CD8-positive, alpha-beta T cell (primary cell): ENCODE measurements at regions of chr6 and their contacts with region 1.

Region 1: GRCh38 chr6:5143634-5144311 is 58.6 kb downstream of the PPP1R3G start:
- DNase-seq: peak; percentile 72 to 90 (median 84)
- ATAC-seq: peak; percentile 73
- H3K4me3 ChIP-seq: no peak overlapping the region
- H3K4me3 Mint-ChIP-seq: no peak overlapping the region
- H3K27ac ChIP-seq: no peak overlapping the region
- H3K27ac Mint-ChIP-seq: no peak overlapping the region
- H3K4me1 ChIP-seq: no peaks in the 10 kb centered on the region
- H3K4me1 Mint-ChIP-seq: peaks cover 2% of the 10 kb centered on the region
- H3K27me3 ChIP-seq: no peaks in the 10 kb centered on the region
- H3K27me3 Mint-ChIP-seq: no peaks in the 10 kb centered on the region
- CTCF ChIP-seq: peak; percentile 98

Region 2: GRCh38 chr6:5159148-5159547 is 15.4 kb after region 1 on chr6:
- CTCF ChIA-PET with region 1: interaction called, 18 read pairs
- POLR2A ChIA-PET with region 1: interaction called, 3 read pairs
- intact Hi-C with region 1: no loop called
- DNase-seq: no peak
- ATAC-seq: no peak
- H3K4me3 ChIP-seq: no peak overlapping the region
- H3K4me3 Mint-ChIP-seq: no peak overlapping the region
- H3K27ac ChIP-seq: no peak overlapping the region
- H3K27ac Mint-ChIP-seq: no peak overlapping the region
- H3K4me1 ChIP-seq: no peaks in the 10 kb centered on the region
- H3K4me1 Mint-ChIP-seq: no peaks in the 10 kb centered on the region
- H3K27me3 ChIP-seq: no peaks in the 10 kb centered on the region
- H3K27me3 Mint-ChIP-seq: no peaks in the 10 kb centered on the region
- CTCF ChIP-seq: no peak

Region 3: DNA sequence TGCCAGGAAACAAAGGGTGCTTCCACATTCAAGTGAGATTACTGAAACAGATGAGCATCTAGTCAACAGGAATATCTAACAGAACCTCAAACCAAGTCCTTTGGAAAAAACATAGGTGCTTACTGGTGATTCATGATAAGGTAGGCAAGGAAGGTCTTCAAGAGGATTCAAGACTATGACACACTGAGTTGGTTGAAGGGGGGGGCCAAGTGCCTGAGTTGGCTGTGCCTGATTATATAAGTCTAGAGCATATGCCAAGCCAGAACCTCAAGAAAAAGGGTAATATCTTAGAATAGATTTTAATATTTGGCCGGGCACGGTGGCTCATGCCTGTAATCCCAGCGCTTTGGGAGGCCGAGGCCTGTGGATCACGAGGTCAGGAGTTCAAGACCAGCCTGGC is 53.3 kb after region 1 on chr6:
- CTCF ChIA-PET with region 1: interaction called, 11 read pairs
- POLR2A ChIA-PET with region 1: no interaction called
- intact Hi-C with region 1: no loop called
- DNase-seq: no peak
- ATAC-seq: no peak
- H3K4me3 ChIP-seq: no peak overlapping the region
- H3K4me3 Mint-ChIP-seq: no peak overlapping the region
- H3K27ac ChIP-seq: no peak overlapping the region
- H3K27ac Mint-ChIP-seq: no peak overlapping the region
- H3K4me1 ChIP-seq: no peaks in the 10 kb centered on the region
- H3K4me1 Mint-ChIP-seq: no peaks in the 10 kb centered on the region
- H3K27me3 ChIP-seq: no peaks in the 10 kb centered on the region
- H3K27me3 Mint-ChIP-seq: no peaks in the 10 kb centered on the region
- CTCF ChIP-seq: no peak

Region 4: DNA sequence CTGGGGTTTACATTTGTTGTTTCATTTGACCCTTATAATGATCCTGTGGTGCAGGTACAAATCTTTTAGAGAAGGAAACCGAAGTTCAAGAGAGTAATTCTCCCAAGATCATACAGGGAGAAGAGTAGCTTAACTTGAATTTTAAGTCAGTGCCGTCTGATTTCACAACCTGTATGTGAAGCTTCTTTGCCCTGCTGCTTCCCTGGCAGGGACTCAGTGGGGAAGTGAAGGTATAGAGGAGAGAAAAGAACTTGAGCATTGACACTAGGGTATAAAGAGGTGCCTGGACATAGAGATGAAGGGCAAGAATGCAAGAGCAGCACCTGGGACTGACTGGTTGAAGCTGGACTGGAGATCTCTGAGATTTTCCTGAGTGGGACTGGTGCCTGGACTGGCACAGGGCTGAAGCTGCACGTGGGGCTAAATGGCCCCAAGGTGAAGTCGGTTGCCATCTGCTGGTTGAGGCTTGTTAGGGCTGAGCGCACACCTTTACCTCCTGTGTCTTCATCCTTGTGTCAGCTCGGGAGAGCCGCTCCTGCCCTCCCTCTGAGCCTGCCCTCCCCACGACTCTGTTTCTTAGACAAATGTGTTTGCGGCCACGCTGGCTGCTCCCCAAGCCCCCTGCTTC is 159.3 kb after region 1 on chr6:
- CTCF ChIA-PET with region 1: interaction called, 89 read pairs
- POLR2A ChIA-PET with region 1: no interaction called
- intact Hi-C with region 1: loop called (anchors 1 kb)
- DNase-seq: peak; percentile 5 to 77 (median 57)
- ATAC-seq: peak; percentile 88
- H3K4me3 ChIP-seq: no peak overlapping the region
- H3K4me3 Mint-ChIP-seq: peak overlapping the region; percentile 68
- H3K27ac ChIP-seq: peak overlapping the region in 1 of 2 experiments; percentile 1
- H3K27ac Mint-ChIP-seq: peak overlapping the region; percentile 37
- H3K4me1 ChIP-seq: peaks cover 6% of the 10 kb centered on the region
- H3K4me1 Mint-ChIP-seq: peaks cover 37% of the 10 kb centered on the region
- H3K27me3 ChIP-seq: no peaks in the 10 kb centered on the region
- H3K27me3 Mint-ChIP-seq: no peaks in the 10 kb centered on the region
- CTCF ChIP-seq: peak; percentile 51

Region 5: DNA sequence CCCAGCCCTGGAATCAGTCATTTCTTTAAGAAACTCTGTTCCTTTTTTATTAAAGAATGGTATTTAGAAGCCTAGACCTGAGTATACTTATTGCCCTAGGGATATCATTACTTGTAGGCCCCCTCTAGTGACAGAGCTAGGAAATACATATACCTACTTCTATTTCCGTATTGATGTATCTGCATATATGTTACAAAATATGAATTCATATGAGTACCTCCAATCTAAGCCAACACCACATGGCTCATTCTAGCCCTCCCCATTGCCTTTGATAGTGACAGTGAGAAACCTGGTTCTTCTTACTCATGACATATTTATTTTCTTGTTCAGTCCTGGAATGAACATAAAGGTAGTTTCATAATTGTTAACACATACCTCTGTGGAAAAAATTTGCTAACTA is 254.8 kb after region 1 on chr6:
- CTCF ChIA-PET with region 1: interaction called, 65 read pairs
- POLR2A ChIA-PET with region 1: no interaction called
- intact Hi-C with region 1: loop called (anchors 1 kb)
- DNase-seq: peak in 2 of 9 experiments; percentile 49 to 62
- ATAC-seq: peak; percentile 85
- H3K4me3 ChIP-seq: no peak overlapping the region
- H3K4me3 Mint-ChIP-seq: no peak overlapping the region
- H3K27ac ChIP-seq: no peak overlapping the region
- H3K27ac Mint-ChIP-seq: no peak overlapping the region
- H3K4me1 ChIP-seq: no peaks in the 10 kb centered on the region
- H3K4me1 Mint-ChIP-seq: no peaks in the 10 kb centered on the region
- H3K27me3 ChIP-seq: no peaks in the 10 kb centered on the region
- H3K27me3 Mint-ChIP-seq: no peaks in the 10 kb centered on the region
- CTCF ChIP-seq: peak; percentile 64